ENCODE measurements at regions of chr17 and their contacts with region 1.

Region 1: DNA sequence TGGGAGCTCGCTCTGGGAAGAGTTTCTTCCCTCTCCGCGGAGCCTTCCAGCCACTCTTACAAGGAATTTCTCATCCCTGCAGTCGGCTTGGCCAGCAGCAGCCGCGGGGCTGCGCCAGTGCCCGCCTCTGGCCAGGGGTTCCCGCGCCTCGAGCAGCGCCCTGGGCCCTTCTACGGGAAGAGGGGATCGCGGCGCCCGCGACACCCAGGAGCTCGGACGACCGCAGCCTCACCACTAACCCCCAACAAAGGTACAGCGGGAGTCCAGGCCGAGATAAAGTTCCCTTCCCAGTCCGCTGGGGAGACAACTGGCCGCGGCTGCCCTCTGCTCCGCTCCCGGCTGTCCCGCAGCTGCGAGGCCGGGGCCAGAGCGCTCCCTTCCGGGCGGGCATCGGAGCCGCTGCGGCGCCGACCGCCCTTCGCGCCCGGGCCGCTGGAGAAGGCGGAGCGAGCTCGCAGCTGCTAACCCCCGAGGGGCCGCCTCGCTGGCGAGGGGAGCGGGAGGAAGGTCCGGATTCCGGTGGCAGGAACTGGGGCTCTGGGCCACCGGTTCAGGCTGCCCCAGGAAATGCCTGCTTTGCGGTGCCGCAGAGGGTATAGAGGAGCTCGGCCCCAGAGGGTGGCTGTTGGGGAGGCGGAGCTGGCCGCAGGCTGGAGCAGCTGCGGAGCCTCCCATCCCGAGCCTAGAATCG is 3.6 kb upstream of the HS3ST3B1 start:
- DNase-seq: no peak
- H3K4me3 ChIP-seq: peak overlapping the region; percentile 25
- H3K27ac ChIP-seq: no peak overlapping the region
- H3K4me1 ChIP-seq: peaks cover 12% of the 10 kb centered on the region
- H3K27me3 ChIP-seq: peaks cover 57% of the 10 kb centered on the region
- CTCF ChIP-seq: no peak

Region 2: GRCh38 chr17:13337864-13338371 is 959.4 kb before region 1 on chr17:
- intact Hi-C with region 1: loop called (anchors 10 kb)
- DNase-seq: peak; percentile 31
- H3K4me3 ChIP-seq: no peak overlapping the region
- H3K27ac ChIP-seq: no peak overlapping the region
- H3K4me1 ChIP-seq: no peaks in the 10 kb centered on the region
- H3K27me3 ChIP-seq: no peaks in the 10 kb centered on the region
- CTCF ChIP-seq: peak; percentile 69

Region 3: GRCh38 chr17:13594762-13595598 is 702.3 kb before region 1 on chr17:
- intact Hi-C with region 1: loop called (anchors 5 kb)
- DNase-seq: peak; percentile 83
- H3K4me3 ChIP-seq: no peak overlapping the region
- H3K27ac ChIP-seq: no peak overlapping the region
- H3K4me1 ChIP-seq: no peaks in the 10 kb centered on the region
- H3K27me3 ChIP-seq: peaks cover under 1% of the 10 kb centered on the region
- CTCF ChIP-seq: peak; percentile 85

Region 4: DNA sequence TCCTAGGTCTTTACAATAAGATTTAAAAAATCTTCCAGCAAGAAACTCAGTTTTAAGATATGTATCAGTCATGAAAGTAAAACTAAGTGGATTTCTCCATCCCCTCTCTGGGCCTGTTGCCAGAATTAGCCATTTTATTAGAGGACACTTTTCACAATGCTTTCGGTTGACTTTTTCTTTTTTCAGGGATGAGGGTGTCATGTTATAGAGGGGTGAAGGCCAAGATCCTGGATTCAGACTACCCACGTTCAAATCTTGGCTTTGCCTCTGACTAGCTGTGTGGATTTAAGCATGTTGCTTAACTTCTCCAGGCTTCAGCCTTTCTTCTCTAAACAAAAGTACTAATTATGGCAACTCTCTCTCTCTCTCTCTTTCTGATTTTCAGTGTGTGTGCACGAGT is 339.7 kb before region 1 on chr17:
- intact Hi-C with region 1: loop called (anchors 10 kb)
- DNase-seq: no peak
- H3K4me3 ChIP-seq: no peak overlapping the region
- H3K27ac ChIP-seq: no peak overlapping the region
- H3K4me1 ChIP-seq: no peaks in the 10 kb centered on the region
- H3K27me3 ChIP-seq: no peaks in the 10 kb centered on the region
- CTCF ChIP-seq: no peak

Region 5: DNA sequence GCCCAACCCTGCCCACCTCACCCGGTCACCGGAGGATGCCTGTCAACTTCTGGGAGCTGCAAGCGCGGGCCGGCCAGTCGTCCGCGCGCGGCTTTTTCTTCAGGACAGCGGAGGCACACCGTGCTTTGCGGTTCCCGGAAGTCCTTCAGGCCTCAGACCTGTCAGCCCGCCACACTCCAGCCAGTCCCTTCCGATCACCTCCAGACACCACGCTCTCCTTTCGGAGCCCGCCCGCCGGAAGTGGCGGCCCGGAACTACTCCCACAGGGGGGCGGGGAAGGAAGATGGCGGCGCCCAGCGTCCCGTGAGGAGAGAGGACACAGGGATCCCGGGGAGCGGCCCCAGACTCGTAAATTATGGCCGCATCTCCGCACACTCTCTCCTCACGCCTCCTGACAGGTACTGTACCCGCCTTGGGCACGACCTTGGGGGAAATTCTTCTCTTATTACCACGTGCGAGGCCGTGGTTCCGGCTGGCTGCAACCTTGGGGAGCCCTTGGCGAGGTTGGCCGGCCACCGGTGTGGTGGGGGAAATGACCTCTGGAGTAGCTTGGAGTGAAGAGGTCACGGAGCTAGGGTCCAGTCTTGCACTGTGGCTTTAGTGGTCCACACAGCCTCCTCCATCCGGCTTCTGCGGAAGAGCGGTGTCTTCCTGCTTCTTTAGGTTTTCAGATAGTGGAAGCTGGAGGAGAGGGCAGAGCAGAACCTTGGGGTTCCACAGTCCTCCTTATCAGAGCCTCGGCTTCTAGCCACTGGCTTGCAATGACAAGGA is 227.9 kb before region 1 on chr17 and contains the start of gene COX10:
- intact Hi-C with region 1: loop called (anchors 10 kb)
- DNase-seq: peak; percentile 95
- H3K4me3 ChIP-seq: peak within 1 kb of the TSS; percentile 93
- H3K27ac ChIP-seq: peak within 1 kb of the TSS; percentile 83
- H3K4me1 ChIP-seq: peaks cover 3% of the 10 kb centered on the region
- H3K27me3 ChIP-seq: no peaks in the 10 kb centered on the region
- CTCF ChIP-seq: no peak
- total RNA-seq, gene COX10: 35.1 to 36.0 TPM